ENCODE measurements at regions of chr16 and their contacts with region 1.

Region 1: GRCh38 chr16:7268182-7268581 is 64.5 kb upstream of the RBFOX1 start:
- DNase-seq: peak; percentile 17 to 60
- ATAC-seq: peak; percentile 67 to 68
- H3K4me3 ChIP-seq: no peak overlapping the region
- H3K27ac ChIP-seq: peak overlapping the region; percentile 36 to 77 (median 70)
- H3K4me1 ChIP-seq: peaks cover 11 to 28% of the 10 kb centered on the region in 2 donors
- H3K27me3 ChIP-seq: no peaks in the 10 kb centered on the region
- CTCF ChIP-seq: peak; percentile 63 to 81 (median 75)
- POLR2A ChIP-seq: no peak

Region 2: DNA sequence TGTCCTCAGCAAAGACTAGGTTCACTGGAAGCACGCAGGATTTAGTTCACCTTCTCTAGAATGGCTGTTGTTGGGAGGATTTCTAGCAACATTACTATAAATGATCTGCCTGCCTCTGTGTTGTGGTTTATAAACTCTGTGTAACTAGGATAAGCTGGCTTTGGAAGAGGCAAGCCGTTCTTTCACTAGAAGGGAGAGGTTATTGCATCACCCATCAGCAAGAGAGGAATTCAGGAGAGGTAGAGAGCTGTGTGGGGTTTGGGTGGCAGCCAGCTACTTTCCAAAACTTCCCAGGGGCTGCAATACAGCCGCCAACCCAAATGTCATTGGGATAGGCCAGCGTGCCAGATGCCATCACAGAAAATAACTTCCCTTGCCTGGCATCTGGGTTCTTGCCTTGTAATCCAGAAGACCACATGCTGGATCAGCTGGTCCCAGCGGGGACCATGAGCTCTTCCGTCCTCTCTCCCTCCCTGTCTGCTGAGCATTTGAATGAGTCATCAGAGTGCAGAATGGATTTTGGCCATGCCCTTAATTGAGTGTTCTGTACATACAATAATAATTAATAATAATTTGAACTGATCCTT is 31.3 kb before region 1 on chr16:
- in situ Hi-C with region 1: no loop called
- intact Hi-C with region 1: no loop called
- DNase-seq: peak in 1 of 2 donors; percentile 12
- ATAC-seq: peak in 1 of 2 donors; percentile 24
- H3K4me3 ChIP-seq: no peak overlapping the region
- H3K27ac ChIP-seq: no peak overlapping the region
- H3K4me1 ChIP-seq: no peaks in the 10 kb centered on the region
- H3K27me3 ChIP-seq: no peaks in the 10 kb centered on the region
- CTCF ChIP-seq: no peak
- POLR2A ChIP-seq: no peak

Region 3: GRCh38 chr16:7303052-7303610 is 34.9 kb after region 1 on chr16:
- in situ Hi-C with region 1: no loop called
- intact Hi-C with region 1: loop called (anchors 2 kb)
- DNase-seq: no peak
- ATAC-seq: peak; percentile 51 to 61
- H3K4me3 ChIP-seq: peak overlapping the region; percentile 55 to 70 (median 58)
- H3K27ac ChIP-seq: peak overlapping the region in 1 of 4 donors; percentile 30
- H3K4me1 ChIP-seq: peaks cover 3 to 16% of the 10 kb centered on the region in 2 donors
- H3K27me3 ChIP-seq: peaks cover 4 to 11% (median 10%) of the 10 kb centered on the region in 3 donors
- CTCF ChIP-seq: peak in 2 of 5 experiments; percentile 34 to 44
- POLR2A ChIP-seq: no peak

Region 4: GRCh38 chr16:7509963-7510601 is 241.9 kb after region 1 on chr16:
- in situ Hi-C with region 1: no loop called
- intact Hi-C with region 1: loop called (anchors 10 kb)
- DNase-seq: no peak
- ATAC-seq: no peak
- H3K4me3 ChIP-seq: no peak overlapping the region
- H3K27ac ChIP-seq: no peak overlapping the region
- H3K4me1 ChIP-seq: peaks cover 36 to 38% of the 10 kb centered on the region in 2 donors
- H3K27me3 ChIP-seq: no peaks in the 10 kb centered on the region
- CTCF ChIP-seq: no peak
- POLR2A ChIP-seq: no peak

Region 5: DNA sequence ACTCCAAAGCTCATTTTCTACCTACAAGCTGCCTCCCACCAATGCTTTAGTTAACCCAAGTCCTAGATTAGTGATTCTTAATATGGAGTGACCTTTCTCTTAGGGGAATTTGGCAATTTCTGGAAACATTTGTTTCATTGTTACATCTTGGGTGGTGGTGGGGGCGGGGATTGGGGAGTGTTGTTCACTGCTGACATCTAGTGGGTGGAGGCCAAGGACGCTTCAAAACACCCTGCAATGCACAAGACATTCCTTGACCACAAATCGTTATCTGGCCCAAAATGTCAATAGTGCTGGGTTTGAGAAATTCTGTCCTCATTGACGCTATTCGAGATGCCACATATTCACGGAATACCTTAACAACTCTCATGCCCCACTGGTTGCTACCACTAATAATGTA is 347.4 kb after region 1 on chr16:
- in situ Hi-C with region 1: loop called in 2 of 4 experiments (anchors 10 to 25 kb)
- intact Hi-C with region 1: no loop called
- DNase-seq: peak in 1 of 2 donors; percentile 25
- ATAC-seq: peak in 1 of 2 donors; percentile 69
- H3K4me3 ChIP-seq: no peak overlapping the region
- H3K27ac ChIP-seq: no peak overlapping the region
- H3K4me1 ChIP-seq: peaks cover 0 to 4% of the 10 kb centered on the region in 2 donors
- H3K27me3 ChIP-seq: no peaks in the 10 kb centered on the region
- CTCF ChIP-seq: peak in 3 of 5 experiments; percentile 13 to 42 (median 36)
- POLR2A ChIP-seq: no peak

Region 6: GRCh38 chr16:8173111-8173644 is 905.0 kb after region 1 on chr16:
- in situ Hi-C with region 1: loop called in 1 of 4 experiments (anchors 25 kb)
- intact Hi-C with region 1: no loop called
- DNase-seq: peak; percentile 4 to 25
- ATAC-seq: peak in 1 of 2 donors; percentile 68
- H3K4me3 ChIP-seq: no peak overlapping the region
- H3K27ac ChIP-seq: no peak overlapping the region
- H3K4me1 ChIP-seq: no peaks in the 10 kb centered on the region
- H3K27me3 ChIP-seq: no peaks in the 10 kb centered on the region
- CTCF ChIP-seq: peak; percentile 21 to 57 (median 43)
- POLR2A ChIP-seq: no peak